ENCODE measurements at regions of chr12 and their contacts with region 1.

Region 1: GRCh38 chr12:452667-453210 is 7.0 kb upstream of the B4GALNT3 start:
- ATAC-seq: peak in 2 of 8 experiments; percentile 27 to 42
- H3K4me3 ChIP-seq: no peak overlapping the region
- H3K27ac ChIP-seq: no peak overlapping the region
- H3K4me1 ChIP-seq: peaks cover 0 to 2% of the 10 kb centered on the region in 2 donors

Region 2: DNA sequence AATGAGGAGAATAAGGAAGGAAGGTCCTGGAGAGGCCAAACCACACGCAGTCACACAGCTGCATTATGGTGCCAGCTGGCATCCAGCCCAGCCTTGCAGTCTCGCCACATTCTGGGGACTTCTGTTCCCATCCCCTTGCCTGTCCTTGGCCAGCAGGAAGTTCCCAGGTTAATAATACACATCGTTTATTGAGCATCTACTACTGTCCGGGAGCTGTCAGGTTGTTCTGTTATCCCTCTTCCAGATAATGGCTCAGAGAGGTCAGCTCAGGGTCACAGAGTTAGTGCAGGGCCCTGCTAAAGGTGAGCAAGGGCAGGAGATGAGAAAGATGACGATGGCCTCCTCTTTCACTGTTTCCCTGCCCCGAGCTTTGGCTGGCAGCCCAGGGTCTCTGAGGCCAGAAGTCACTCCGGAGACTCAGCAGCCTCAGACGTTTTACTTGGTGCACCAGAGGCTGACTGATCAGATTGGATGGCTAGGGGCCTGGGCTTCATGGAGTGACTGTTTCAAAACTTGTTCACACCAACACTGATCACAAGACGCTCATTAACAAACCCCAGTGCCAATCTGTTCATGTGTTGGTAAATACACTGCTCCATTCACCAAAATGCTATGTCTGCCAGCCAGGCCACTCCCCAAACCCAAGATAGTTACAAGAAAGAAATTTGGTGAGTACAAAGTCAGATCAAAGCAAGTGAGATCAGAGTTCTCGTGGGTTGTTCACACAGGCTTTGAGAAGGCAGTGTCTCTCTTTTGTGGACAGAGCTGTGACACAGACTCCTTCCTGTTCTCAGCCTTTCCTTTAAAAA is 86.2 kb after region 1 on chr12:
- in situ Hi-C with region 1: loop called in 3 of 9 experiments (anchors 5 to 10 kb)
- ATAC-seq: peak in 2 of 8 experiments; percentile 27 to 44
- H3K4me3 ChIP-seq: no peak overlapping the region
- H3K27ac ChIP-seq: no peak overlapping the region
- H3K4me1 ChIP-seq: peaks cover 16 to 19% of the 10 kb centered on the region in 2 donors

Measured in motor neuron (in vitro differentiated cells).